ENCODE measurements at regions of chr11 and their contacts with region 1.

Region 1: DNA sequence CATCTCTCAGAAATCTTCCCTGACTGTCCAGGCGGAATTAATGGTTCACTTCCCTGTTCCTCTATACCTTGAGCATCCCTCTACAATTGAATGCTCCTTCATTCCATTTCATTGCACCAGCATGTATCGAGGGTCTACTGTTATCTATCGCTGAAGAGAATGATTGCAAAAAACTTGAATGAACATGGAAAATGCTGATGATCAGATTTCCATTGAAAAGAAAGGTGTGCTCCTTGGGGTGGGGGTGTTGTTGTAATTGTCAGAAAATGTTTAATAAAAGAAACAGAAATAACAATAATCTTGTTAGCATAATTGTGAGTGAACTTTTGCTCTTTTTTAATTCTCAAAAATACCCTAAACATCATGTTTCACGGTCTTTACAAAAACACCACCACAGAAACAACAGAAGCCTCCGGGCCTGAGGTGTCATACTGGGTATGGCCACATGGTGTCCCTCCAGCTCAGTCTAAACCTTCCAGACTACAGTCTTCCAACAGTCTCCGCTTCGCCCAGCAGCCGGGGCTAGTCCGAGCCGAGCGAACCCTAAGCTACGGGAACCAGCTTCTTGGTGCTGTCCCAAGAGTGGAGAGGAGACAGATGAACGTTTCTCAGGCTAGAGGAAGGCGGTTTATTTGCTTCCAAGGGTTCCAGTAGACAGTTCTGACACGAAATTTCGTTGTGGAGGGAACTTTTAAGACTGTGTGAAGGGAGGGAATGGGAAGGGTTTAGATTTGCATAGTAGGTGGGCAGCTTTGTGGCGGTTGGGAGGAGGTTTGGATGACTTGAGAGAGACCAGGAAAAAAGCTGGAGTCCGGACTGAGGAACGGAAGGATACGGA is 75.8 kb upstream of the ZBED5 start:
- DNase-seq: peak; percentile 93
- H3K4me3 Mint-ChIP-seq: peak overlapping the region; percentile 81
- H3K27ac Mint-ChIP-seq: no peak overlapping the region
- H3K4me1 Mint-ChIP-seq: peaks cover 21% of the 10 kb centered on the region
- H3K27me3 Mint-ChIP-seq: peaks cover 54% of the 10 kb centered on the region

Region 2: GRCh38 chr11:10208131-10208575 is 725.5 kb before region 1 on chr11:
- intact Hi-C with region 1: no loop called
- DNase-seq: peak; percentile 68
- H3K4me3 Mint-ChIP-seq: no peak overlapping the region
- H3K27ac Mint-ChIP-seq: no peak overlapping the region
- H3K4me1 Mint-ChIP-seq: peaks cover 1% of the 10 kb centered on the region
- H3K27me3 Mint-ChIP-seq: peaks cover 21% of the 10 kb centered on the region

Region 3: GRCh38 chr11:10792398-10792975 is 141.2 kb before region 1 on chr11:
- intact Hi-C with region 1: loop called (anchors 2 kb)
- DNase-seq: peak; percentile 95
- H3K4me3 Mint-ChIP-seq: peak overlapping the region; percentile 1
- H3K27ac Mint-ChIP-seq: no peak overlapping the region
- H3K4me1 Mint-ChIP-seq: peaks cover 11% of the 10 kb centered on the region
- H3K27me3 Mint-ChIP-seq: peaks cover 16% of the 10 kb centered on the region

Region 4: GRCh38 chr11:10857709-10858438 is 75.8 kb before region 1 on chr11 and contains the start of gene ZBED5:
- intact Hi-C with region 1: loop called (anchors 1 kb)
- DNase-seq: peak; percentile 99
- H3K4me3 Mint-ChIP-seq: peak within 1 kb of the TSS; percentile 100
- H3K27ac Mint-ChIP-seq: peak within 1 kb of the TSS; percentile 100
- H3K4me1 Mint-ChIP-seq: peaks cover 35% of the 10 kb centered on the region
- H3K27me3 Mint-ChIP-seq: no peaks in the 10 kb centered on the region
- total RNA-seq, gene ZBED5: 41.8 and 43.1 TPM in 2 replicates

Region 5: DNA sequence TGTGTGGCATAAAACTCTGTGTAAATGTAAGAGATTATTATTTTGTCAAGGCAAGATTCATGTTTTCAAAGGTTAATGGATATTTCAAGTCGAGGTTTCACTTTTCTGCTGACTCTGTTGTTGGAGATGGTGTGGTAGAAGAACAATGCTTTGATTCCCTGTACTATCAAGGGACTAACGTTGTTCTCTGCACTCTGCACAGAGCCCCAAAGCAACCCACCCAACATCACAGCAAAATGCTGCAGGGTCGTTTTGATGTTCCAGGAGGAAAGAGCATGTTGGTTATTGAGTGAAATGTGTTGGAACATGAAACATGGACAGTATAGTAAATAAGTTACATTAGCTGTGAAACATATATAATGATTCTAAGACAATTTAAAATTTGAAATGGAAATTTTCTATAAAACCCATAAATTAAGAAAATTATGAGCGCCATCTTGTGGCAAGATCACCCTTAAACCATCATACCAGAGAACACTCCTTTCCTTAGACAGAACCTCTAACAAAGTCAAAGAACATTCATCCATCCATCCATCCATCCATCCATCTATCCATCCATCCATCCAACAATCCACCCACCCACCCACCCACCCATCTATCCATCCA is 88.6 kb after region 1 on chr11:
- intact Hi-C with region 1: loop called (anchors 1 kb)
- DNase-seq: peak; percentile 65
- H3K4me3 Mint-ChIP-seq: no peak overlapping the region
- H3K27ac Mint-ChIP-seq: no peak overlapping the region
- H3K4me1 Mint-ChIP-seq: peaks cover 2% of the 10 kb centered on the region
- H3K27me3 Mint-ChIP-seq: peaks cover 17% of the 10 kb centered on the region

Region 6: DNA sequence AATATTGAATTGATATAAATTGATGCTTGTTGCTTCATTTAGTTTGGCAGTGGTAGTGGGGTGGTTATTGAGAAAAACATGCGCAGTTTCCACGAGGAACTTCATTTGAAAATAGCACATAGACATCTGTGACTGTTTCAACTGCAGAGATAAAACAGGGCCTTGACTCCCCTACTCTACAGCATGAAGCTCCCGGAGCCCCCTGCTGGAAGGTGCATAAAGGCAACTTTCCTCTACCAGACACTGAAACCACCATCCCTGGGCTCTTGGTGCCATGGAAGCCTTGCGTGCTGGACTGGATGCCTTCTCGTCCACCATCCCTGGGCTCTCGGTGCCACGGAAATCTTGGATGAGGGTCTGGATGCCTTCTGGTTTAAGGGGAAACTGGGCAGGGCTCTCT is 223.5 kb after region 1 on chr11:
- intact Hi-C with region 1: loop called (anchors 10 kb)
- DNase-seq: peak; percentile 84
- H3K4me3 Mint-ChIP-seq: no peak overlapping the region
- H3K27ac Mint-ChIP-seq: no peak overlapping the region
- H3K4me1 Mint-ChIP-seq: peaks cover 13% of the 10 kb centered on the region
- H3K27me3 Mint-ChIP-seq: peaks cover 3% of the 10 kb centered on the region

Region 7: DNA sequence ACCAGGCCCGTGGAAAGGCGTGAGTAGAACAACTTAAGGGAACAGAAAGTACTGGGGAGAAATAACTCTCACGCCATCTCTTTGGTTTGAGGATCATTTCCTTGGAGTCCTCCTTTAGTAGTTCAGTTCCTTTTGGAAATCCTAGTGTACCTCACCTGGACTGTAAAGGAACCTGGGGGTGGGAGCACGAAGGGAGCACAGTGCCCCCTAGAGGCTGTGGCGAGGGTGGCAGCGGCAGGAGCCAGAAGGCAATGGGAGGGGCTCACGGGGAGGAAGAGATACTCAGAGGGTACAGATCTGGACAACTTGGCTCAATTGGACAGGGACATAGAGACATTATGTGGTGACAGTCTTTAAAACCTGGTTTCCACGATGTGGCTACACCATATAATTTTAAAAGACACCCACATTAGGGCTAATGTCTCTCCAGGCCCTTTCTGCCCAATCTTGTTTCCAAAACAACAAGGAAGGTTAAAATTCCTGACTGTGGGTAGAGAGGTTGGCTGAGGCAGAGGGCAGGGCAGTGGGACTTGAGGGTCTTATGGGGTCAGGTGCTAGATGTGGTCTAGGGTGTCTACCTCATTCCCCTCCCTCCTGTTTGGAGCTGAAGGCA is 332.4 kb after region 1 on chr11:
- intact Hi-C with region 1: loop called (anchors 10 kb)
- DNase-seq: peak; percentile 89
- H3K4me3 Mint-ChIP-seq: no peak overlapping the region
- H3K27ac Mint-ChIP-seq: no peak overlapping the region
- H3K4me1 Mint-ChIP-seq: no peaks in the 10 kb centered on the region
- H3K27me3 Mint-ChIP-seq: peaks cover 4% of the 10 kb centered on the region